ENCODE measurements at regions of chr10 and their contacts with region 1.

Region 1: GRCh38 chr10:119859420-119860258 is 13.0 kb downstream of the MCMBP start:
- DNase-seq: no peak
- ATAC-seq: peak in 2 of 4 donors; percentile 57 to 85
- H3K4me3 ChIP-seq: no peak overlapping the region
- H3K27ac ChIP-seq: no peak overlapping the region
- H3K4me1 ChIP-seq: peaks cover 6% of the 10 kb centered on the region
- H3K27me3 ChIP-seq: no peaks in the 10 kb centered on the region
- CTCF ChIP-seq: peak; percentile 68

Region 2: DNA sequence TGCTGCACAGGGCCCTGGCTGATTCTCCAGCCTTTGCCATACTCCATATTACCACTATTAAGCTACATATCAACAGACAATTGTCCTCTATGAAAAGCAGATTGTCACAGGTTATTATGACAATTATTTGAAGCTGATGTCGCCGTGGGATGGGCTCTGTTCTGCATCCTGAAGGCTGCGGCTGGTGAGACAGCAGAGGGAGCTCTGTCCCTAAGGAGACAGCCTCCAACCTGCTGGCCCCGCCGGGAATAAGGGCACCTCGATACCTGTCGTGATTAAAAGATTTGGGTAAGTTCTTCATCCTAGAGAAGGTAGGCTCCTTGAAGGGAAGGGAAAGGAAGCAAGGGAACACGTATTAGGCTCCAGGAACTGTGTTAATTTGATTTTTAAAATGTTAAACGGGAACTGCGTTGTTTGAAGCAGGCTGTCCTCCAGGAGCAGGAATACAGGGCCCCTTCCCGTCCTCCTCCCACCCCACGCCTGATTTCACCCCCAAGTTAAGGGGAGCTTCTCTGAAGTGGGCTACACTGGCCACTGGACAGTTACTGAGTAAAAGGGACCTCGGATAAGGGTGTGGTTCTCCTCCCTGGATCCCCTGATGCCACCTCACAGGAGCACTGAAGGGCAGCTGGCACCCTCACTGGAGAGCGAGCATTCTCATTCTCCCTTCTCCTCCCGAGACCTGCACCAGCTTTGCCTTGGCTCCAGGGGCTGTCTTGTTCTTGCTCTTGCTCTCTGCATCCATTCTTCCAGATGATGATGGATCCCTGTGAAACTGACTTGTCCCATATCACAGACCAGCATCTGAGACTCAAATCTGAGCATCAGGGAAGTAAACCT is 251.1 kb before region 1 on chr10:
- intact Hi-C with region 1: loop called (anchors 5 kb)
- DNase-seq: peak; percentile 43 to 78
- ATAC-seq: peak; percentile 89 to 98 (median 94)
- H3K4me3 ChIP-seq: peak overlapping the region; percentile 34
- H3K27ac ChIP-seq: no peak overlapping the region
- H3K4me1 ChIP-seq: peaks cover 7% of the 10 kb centered on the region
- H3K27me3 ChIP-seq: no peaks in the 10 kb centered on the region
- CTCF ChIP-seq: peak; percentile 77

Region 3: GRCh38 chr10:119614686-119615085 is 245.0 kb before region 1 on chr10:
- intact Hi-C with region 1: loop called (anchors 5 kb)
- DNase-seq: no peak
- ATAC-seq: no peak
- H3K4me3 ChIP-seq: no peak overlapping the region
- H3K27ac ChIP-seq: no peak overlapping the region
- H3K4me1 ChIP-seq: peaks cover 13% of the 10 kb centered on the region
- H3K27me3 ChIP-seq: no peaks in the 10 kb centered on the region
- CTCF ChIP-seq: no peak

Region 4: GRCh38 chr10:119686439-119687191 is 173.0 kb before region 1 on chr10:
- intact Hi-C with region 1: loop called (anchors 2 to 5 kb)
- DNase-seq: peak; percentile 82 to 92
- ATAC-seq: peak; percentile 66 to 73 (median 70)
- H3K4me3 ChIP-seq: peak overlapping the region; percentile 39
- H3K27ac ChIP-seq: peak overlapping the region; percentile 62
- H3K4me1 ChIP-seq: peaks cover 10% of the 10 kb centered on the region
- H3K27me3 ChIP-seq: no peaks in the 10 kb centered on the region
- CTCF ChIP-seq: peak; percentile 94

Region 5: DNA sequence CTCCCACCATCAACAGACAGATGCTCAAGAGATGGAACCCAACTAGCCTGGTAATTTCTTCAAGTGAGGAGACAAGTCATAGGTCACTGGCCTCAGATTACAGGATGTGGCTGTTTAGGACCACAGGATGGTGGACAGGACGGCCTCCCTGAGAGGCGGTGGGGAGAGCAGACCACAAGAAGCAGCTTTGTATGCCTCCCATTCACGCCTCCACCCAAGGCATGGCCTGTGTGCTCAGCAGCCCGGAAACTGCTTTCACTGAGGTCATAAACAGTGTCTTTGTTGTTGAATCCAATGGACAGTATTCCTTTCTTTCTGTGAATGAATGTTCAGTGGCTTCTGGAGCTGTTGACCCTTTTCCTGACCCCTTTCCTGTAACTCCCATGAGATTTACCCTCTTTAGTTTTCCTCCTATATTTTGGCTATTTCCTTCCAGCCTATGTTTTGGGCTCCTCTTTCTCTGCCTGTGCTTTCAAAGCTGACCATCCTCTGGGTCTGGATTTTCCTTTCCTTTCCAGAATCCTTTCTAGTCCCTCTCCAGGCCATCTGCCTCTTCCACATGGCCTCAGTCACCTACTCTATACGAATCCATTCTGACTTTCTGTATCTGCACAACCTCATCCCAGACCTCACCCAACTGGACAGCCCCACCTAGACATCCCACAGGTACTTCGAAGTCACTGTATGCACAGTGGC is 166.2 kb before region 1 on chr10:
- intact Hi-C with region 1: loop called in 1 of 2 experiments (anchors 5 kb)
- DNase-seq: no peak
- ATAC-seq: no peak
- H3K4me3 ChIP-seq: no peak overlapping the region
- H3K27ac ChIP-seq: no peak overlapping the region
- H3K4me1 ChIP-seq: no peaks in the 10 kb centered on the region
- H3K27me3 ChIP-seq: no peaks in the 10 kb centered on the region
- CTCF ChIP-seq: no peak

Region 6: GRCh38 chr10:119750391-119751230 is 109.0 kb before region 1 on chr10:
- intact Hi-C with region 1: loop called (anchors 2 kb)
- DNase-seq: peak; percentile 47 to 58
- ATAC-seq: peak; percentile 93 to 97 (median 96)
- H3K4me3 ChIP-seq: no peak overlapping the region
- H3K27ac ChIP-seq: no peak overlapping the region
- H3K4me1 ChIP-seq: peaks cover 25% of the 10 kb centered on the region
- H3K27me3 ChIP-seq: no peaks in the 10 kb centered on the region
- CTCF ChIP-seq: peak; percentile 93